CD4-positive, alpha-beta memory T cell (primary cell): ENCODE measurements at regions of chr1 and their contacts with region 1.

Region 1: DNA sequence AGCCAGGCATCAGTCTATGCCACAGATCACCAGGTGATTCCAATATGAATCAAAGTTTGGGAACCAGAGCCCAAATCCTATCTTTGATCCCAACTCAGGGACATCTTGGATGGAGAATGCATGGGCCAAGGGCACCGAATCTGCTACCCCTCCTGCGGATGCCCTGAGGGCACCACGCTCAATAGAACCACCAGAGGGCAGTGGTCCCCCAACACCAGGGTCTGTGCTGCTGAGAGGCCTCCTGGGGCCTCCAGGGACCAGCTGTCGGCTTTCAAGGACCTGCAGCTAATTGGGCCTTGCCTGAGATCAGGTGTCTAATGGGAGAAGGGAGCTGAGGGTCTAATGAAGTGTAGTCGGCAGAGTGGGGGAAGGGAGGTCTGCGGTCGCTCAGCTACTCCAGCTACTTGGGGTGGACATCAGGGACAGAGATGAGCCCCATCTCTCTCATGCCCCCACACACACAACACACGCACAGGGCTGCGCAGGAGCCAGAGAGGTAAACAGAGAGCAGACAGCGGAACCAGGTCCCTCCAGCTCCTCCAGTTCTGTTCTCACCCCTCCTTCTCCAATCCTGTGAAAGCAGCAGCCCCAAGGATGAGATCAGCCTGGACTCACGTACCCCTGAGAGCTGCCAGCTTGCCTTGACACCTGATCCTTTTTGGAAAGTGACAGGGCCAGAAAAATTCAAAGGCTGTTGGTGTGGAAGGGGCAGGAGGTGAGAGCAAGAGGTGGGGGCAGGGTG is 34.9 kb upstream of the PPP1R15B start:
- DNase-seq: peak; percentile 76 to 81 (median 79)
- H3K4me3 ChIP-seq: no peak overlapping the region
- H3K4me3 Mint-ChIP-seq: peak overlapping the region in 1 of 8 donors; percentile 30
- H3K27ac ChIP-seq: peak overlapping the region; percentile 29
- H3K27ac Mint-ChIP-seq: peak overlapping the region; percentile 88 to 94 (median 92)
- H3K4me1 ChIP-seq: peaks cover 27% of the 10 kb centered on the region
- H3K4me1 Mint-ChIP-seq: peaks cover 14 to 54% (median 30%) of the 10 kb centered on the region in 4 donors
- H3K27me3 ChIP-seq: no peaks in the 10 kb centered on the region
- H3K27me3 Mint-ChIP-seq: no peaks in the 10 kb centered on the region

Region 2: DNA sequence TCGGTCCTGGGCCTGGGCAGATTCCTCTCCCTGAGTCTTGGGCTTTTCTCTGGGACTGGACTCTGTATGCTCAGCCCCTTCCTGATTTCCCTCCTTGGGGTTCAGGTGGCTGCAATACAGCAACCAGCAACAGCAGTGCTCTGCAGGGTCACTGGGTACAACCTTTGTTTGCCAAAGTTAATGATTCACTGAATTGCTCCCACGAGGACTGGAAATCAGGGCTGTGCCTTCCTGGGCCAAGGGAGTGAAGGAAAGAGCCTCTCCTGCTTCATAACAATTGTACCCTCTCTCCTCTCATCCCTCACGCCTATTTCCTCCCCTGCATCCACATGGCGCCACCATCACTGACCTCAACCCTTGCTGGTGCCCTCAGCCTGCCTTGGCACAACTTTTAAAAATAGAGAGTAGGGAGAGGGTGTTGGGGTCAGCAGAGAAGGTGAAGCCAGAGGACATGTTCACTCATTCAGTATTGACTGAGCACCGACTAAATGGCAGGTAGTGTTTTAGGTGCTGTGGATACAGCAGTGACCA is 180.0 kb before region 1 on chr1:
- CTCF ChIA-PET with region 1: no interaction called
- POLR2A ChIA-PET with region 1: no interaction called
- intact Hi-C with region 1: no loop called
- DNase-seq: no peak
- H3K4me3 ChIP-seq: no peak overlapping the region
- H3K4me3 Mint-ChIP-seq: no peak overlapping the region
- H3K27ac ChIP-seq: no peak overlapping the region
- H3K27ac Mint-ChIP-seq: no peak overlapping the region
- H3K4me1 ChIP-seq: no peaks in the 10 kb centered on the region
- H3K4me1 Mint-ChIP-seq: no peaks in the 10 kb centered on the region
- H3K27me3 ChIP-seq: peaks cover 6% of the 10 kb centered on the region
- H3K27me3 Mint-ChIP-seq: peaks cover 3 to 9% of the 10 kb centered on the region in 2 donors

Region 3: DNA sequence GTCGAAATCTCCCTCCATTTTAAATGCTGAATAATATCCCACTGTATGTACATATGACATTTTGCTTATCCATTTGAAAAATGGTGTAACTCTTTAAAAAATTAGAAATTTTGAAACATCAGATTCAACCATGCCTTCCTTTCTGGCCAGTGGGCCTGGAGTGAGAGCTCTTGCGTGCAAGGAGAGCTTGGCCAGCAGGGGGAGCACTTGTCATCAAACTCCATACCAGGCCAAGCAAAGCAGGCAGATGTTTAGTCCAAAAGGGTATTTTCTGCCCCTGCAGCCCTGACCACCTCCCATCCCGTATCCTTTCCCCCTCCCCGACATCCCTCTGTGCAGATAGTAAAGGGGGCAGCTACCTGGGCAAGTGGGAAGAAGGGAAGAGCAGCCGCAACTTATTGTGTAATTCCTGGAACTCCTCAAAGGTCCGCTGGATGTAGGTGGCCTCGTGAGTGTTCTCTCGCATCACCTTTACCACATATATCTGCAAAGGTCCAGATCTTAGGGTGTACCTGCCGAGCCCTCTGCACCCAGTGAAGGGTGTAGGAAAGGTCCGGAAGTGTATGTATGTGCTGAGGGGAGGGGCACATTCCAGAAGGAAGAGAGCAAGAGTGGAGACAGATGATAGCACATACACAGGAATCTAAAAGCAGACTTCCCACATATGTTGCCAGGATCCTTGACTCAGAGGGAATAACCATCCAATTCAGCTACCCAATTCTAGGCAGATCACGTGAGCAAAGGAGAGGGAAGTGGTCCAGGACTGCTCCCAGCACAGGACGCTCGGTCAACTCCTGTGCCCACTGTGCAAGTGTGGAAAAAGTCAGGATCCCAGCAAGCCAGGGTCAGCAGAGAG is 15.0 kb before region 1 on chr1:
- CTCF ChIA-PET with region 1: interaction called, 209 read pairs
- POLR2A ChIA-PET with region 1: interaction called, 3 read pairs
- intact Hi-C with region 1: loop called (anchors 1 kb)
- DNase-seq: peak; percentile 68 to 75 (median 71)
- H3K4me3 ChIP-seq: no peak overlapping the region
- H3K4me3 Mint-ChIP-seq: no peak overlapping the region
- H3K27ac ChIP-seq: no peak overlapping the region
- H3K27ac Mint-ChIP-seq: peak overlapping the region in 6 of 7 donors; percentile 8 to 78 (median 71)
- H3K4me1 ChIP-seq: no peaks in the 10 kb centered on the region
- H3K4me1 Mint-ChIP-seq: peaks cover 0 to 9% (median 6%) of the 10 kb centered on the region in 4 donors
- H3K27me3 ChIP-seq: no peaks in the 10 kb centered on the region
- H3K27me3 Mint-ChIP-seq: no peaks in the 10 kb centered on the region

Region 4: GRCh38 chr1:204480515-204480914 is 34.0 kb after region 1 on chr1:
- CTCF ChIA-PET with region 1: interaction called, 24 read pairs
- POLR2A ChIA-PET with region 1: interaction called, 3 read pairs
- intact Hi-C with region 1: no loop called
- DNase-seq: no peak
- H3K4me3 ChIP-seq: no peak overlapping the region
- H3K4me3 Mint-ChIP-seq: peak overlapping the region in 1 of 8 donors; percentile 22
- H3K27ac ChIP-seq: no peak overlapping the region
- H3K27ac Mint-ChIP-seq: peak overlapping the region in 4 of 7 donors; percentile 19 to 77 (median 56)
- H3K4me1 ChIP-seq: peaks cover 55% of the 10 kb centered on the region
- H3K4me1 Mint-ChIP-seq: peaks cover 50 to 88% (median 64%) of the 10 kb centered on the region in 4 donors
- H3K27me3 ChIP-seq: no peaks in the 10 kb centered on the region
- H3K27me3 Mint-ChIP-seq: no peaks in the 10 kb centered on the region

Region 5: GRCh38 chr1:204494281-204495077 is 47.9 kb after region 1 on chr1 and contains the start of gene PIK3C2B:
- CTCF ChIA-PET with region 1: interaction called, 1,077 read pairs
- POLR2A ChIA-PET with region 1: interaction called, 136 read pairs
- intact Hi-C with region 1: loop called (anchors 2 kb)
- DNase-seq: peak; percentile 70 to 84 (median 75)
- H3K4me3 ChIP-seq: peak within 1 kb of the TSS; percentile 62 to 99
- H3K4me3 Mint-ChIP-seq: peak within 1 kb of the TSS; percentile 90 to 99 (median 96)
- H3K27ac ChIP-seq: peak within 1 kb of the TSS; percentile 90
- H3K27ac Mint-ChIP-seq: peak within 1 kb of the TSS; percentile 90 to 99 (median 97)
- H3K4me1 ChIP-seq: peaks cover 47% of the 10 kb centered on the region
- H3K4me1 Mint-ChIP-seq: peaks cover 35 to 72% (median 45%) of the 10 kb centered on the region in 4 donors
- H3K27me3 ChIP-seq: no peaks in the 10 kb centered on the region
- H3K27me3 Mint-ChIP-seq: no peaks in the 10 kb centered on the region
- total RNA-seq, gene PIK3C2B: 43.4 to 46.9 TPM

Region 6: GRCh38 chr1:204516180-204516879 is 69.8 kb after region 1 on chr1 and contains the start of gene MDM4:
- CTCF ChIA-PET with region 1: interaction called, 1,077 read pairs
- POLR2A ChIA-PET with region 1: interaction called, 4 read pairs
- intact Hi-C with region 1: no loop called
- DNase-seq: peak; percentile 93 to 96 (median 94)
- H3K4me3 ChIP-seq: peak within 1 kb of the TSS; percentile 67 to 72
- H3K4me3 Mint-ChIP-seq: no peak within 1 kb of the TSS
- H3K27ac ChIP-seq: peak within 1 kb of the TSS; percentile 98
- H3K27ac Mint-ChIP-seq: peak within 1 kb of the TSS in 1 of 7 donors; percentile 71
- H3K4me1 ChIP-seq: peaks cover 89% of the 10 kb centered on the region
- H3K4me1 Mint-ChIP-seq: peaks cover 30 to 73% (median 38%) of the 10 kb centered on the region in 4 donors
- H3K27me3 ChIP-seq: no peaks in the 10 kb centered on the region
- H3K27me3 Mint-ChIP-seq: no peaks in the 10 kb centered on the region
- total RNA-seq, gene MDM4: 213 to 237 TPM

Region 7: DNA sequence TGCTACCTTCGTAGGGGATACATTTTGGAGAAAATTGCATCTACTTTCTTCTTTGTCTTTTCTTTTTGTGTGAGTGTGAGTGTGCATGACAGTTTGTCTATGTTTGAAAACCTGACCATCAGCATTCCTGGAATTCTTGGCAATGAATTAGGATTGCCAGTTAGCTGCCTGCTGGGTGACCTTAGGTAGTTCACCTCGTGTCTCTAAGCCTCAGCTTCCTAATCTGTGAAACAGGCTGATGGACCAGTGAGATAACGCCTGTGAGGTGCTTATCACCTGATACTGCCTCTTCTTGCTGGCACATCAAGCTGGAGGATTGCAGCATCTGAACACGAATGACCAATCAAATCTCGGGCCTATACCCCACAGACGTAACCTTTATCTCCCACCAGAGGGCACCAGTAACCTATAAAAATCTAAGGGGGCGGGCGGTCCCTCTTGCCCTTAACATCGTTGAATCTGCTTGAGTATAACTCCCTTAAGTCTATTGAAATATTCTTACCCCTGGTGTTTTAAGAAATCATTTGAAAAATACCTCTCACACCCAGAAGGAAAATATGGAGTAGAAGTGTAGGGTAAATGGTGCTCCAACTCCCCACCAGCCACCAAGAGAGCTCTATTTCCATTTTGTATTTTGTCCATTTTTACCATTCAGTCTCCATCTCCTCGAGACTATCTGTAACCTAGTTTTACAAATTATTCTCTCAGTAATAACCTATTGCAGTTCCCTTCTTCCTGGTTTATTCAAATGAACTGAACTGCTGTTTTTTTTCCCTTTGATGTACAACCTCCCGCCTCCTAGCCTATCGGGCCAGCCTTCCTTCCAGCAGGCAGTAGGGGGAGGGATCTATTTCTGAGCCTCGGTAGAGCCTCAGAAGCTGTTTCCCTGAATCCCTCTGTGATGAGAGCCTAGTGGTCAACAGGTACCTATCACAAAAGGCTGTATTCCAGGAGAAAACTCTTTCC is 119.4 kb after region 1 on chr1:
- CTCF ChIA-PET with region 1: interaction called, 11 read pairs
- POLR2A ChIA-PET with region 1: no interaction called
- intact Hi-C with region 1: no loop called
- DNase-seq: peak; percentile 68 to 80 (median 70)
- H3K4me3 ChIP-seq: no peak overlapping the region
- H3K4me3 Mint-ChIP-seq: peak overlapping the region in 4 of 8 donors; percentile 14 to 47 (median 32)
- H3K27ac ChIP-seq: no peak overlapping the region
- H3K27ac Mint-ChIP-seq: peak overlapping the region; percentile 68 to 93 (median 79)
- H3K4me1 ChIP-seq: peaks cover 36% of the 10 kb centered on the region
- H3K4me1 Mint-ChIP-seq: peaks cover 32 to 49% (median 39%) of the 10 kb centered on the region in 4 donors
- H3K27me3 ChIP-seq: no peaks in the 10 kb centered on the region
- H3K27me3 Mint-ChIP-seq: no peaks in the 10 kb centered on the region

Region 8: DNA sequence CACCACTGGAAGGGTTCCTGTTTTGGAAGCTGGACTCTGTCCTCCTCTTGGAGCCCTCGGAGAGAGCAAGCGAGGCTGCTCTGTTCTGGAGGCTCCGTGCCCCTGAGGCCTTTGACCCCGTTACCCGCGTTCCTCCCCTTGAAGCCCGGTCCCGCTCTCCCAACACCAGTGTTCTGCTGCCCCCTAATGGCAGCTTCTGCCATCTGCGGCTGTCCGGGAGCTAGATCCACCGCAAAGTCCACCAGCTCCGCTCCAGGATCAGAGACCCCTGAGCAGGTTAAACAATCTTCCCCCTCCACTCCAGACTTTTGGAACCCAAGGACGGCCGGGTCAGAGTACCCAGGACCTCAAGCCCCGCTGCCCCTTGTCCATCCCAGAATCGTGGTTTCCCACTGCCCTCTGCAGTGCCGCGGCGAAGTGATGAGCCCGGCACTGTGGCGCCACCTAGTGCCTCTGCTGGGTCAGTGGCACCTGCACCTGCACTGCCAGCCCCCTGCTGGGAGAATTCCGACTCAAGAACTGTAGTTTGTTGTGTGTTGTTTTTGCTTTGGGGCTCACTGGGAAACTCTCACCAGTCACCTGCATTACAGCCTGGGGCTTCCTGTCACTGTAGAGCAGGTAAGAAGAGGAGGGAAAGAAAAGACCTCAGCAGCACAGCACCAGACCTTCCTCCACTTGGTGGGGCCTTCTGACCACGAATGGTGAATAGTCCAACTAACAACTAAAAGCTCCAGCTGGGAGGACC is 360.6 kb after region 1 on chr1:
- CTCF ChIA-PET with region 1: interaction called, 5 read pairs
- POLR2A ChIA-PET with region 1: no interaction called
- intact Hi-C with region 1: loop called (anchors 5 kb)
- DNase-seq: peak; percentile 79 to 88 (median 85)
- H3K4me3 ChIP-seq: peak overlapping the region in 1 of 2 donors; percentile 47
- H3K4me3 Mint-ChIP-seq: peak overlapping the region; percentile 82 to 95 (median 92)
- H3K27ac ChIP-seq: no peak overlapping the region
- H3K27ac Mint-ChIP-seq: peak overlapping the region; percentile 1 to 93 (median 62)
- H3K4me1 ChIP-seq: no peaks in the 10 kb centered on the region
- H3K4me1 Mint-ChIP-seq: peaks cover 0 to 6% (median 4%) of the 10 kb centered on the region in 4 donors
- H3K27me3 ChIP-seq: no peaks in the 10 kb centered on the region
- H3K27me3 Mint-ChIP-seq: no peaks in the 10 kb centered on the region